ENCODE measurements at regions of chr16 and their contacts with region 1.

Region 1: DNA sequence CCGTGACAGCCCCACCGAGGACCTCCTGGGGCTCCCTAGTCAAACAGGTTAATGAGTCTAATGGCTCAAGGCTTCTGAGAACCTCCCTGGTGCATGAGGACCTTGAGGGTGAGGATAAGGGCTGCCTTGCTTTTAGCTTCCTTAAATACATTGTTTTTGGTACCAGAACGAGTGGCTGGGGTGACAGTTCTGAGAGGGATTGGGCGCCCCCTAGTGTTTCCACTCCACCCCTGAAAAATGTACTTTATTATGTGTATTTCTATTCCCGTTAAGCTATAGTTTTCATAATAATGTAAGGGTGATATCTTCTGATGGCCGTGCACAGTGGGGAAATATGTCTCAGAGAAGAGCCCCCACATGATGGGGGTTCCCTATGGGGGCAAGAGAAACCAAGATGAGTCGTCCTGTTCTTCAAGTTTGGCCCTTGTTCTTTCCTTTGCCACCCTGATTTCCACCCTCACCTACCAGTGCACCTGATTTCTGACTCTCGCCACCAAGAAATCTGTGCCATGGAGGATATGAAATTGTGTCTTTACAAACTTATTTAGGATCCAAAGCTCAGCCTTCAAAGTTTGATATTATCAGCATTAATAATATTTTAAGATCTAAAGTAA is 14.5 kb upstream of the VWA3A start:
- DNase-seq: peak in 3 of 4 donors; percentile 43 to 67 (median 44)
- ATAC-seq: peak; percentile 89
- H3K4me3 ChIP-seq: no peak overlapping the region
- H3K27ac ChIP-seq: no peak overlapping the region
- H3K4me1 ChIP-seq: no peaks in the 10 kb centered on the region
- H3K27me3 ChIP-seq: no peaks in the 10 kb centered on the region
- CTCF ChIP-seq: peak; percentile 64 to 77

Region 2: DNA sequence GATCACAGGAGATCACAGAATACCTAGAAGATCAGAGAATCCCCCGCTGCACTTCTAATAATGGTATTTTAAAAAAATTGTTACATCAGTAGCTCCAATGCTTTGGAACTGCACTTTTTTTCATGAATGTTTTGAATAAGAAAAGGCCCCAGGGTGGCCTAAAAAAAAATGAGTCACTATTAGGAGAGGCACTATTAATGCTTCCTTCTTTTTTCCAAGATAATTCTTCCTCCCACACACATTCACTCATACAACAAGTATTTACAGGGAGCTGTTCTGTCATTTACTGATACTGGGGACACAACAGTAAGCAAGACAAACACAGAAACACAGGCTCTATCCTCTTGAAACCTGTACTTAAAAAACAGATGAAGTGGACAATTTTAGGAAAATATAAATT is 76.2 kb before region 1 on chr16:
- intact Hi-C with region 1: loop called in 1 of 2 experiments (anchors 5 kb)
- DNase-seq: no peak
- ATAC-seq: peak; percentile 31
- H3K4me3 ChIP-seq: no peak overlapping the region
- H3K27ac ChIP-seq: no peak overlapping the region
- H3K4me1 ChIP-seq: peaks cover 6 to 15% of the 10 kb centered on the region in 2 donors
- H3K27me3 ChIP-seq: no peaks in the 10 kb centered on the region
- CTCF ChIP-seq: no peak

Region 3: GRCh38 chr16:22123146-22123545 is 45.3 kb after region 1 on chr16:
- intact Hi-C with region 1: no loop called
- DNase-seq: no peak
- ATAC-seq: no peak
- H3K4me3 ChIP-seq: no peak overlapping the region
- H3K27ac ChIP-seq: no peak overlapping the region
- H3K4me1 ChIP-seq: no peaks in the 10 kb centered on the region
- H3K27me3 ChIP-seq: no peaks in the 10 kb centered on the region
- CTCF ChIP-seq: no peak

Region 4: GRCh38 chr16:22397464-22397863 is 319.7 kb after region 1 on chr16:
- intact Hi-C with region 1: no loop called
- DNase-seq: peak in 1 of 4 donors; percentile 9
- ATAC-seq: peak; percentile 72
- H3K4me3 ChIP-seq: no peak overlapping the region
- H3K27ac ChIP-seq: no peak overlapping the region
- H3K4me1 ChIP-seq: no peaks in the 10 kb centered on the region
- H3K27me3 ChIP-seq: no peaks in the 10 kb centered on the region
- CTCF ChIP-seq: no peak